Caco-2 (cell line): ENCODE measurements at regions of chr2 and their contacts with region 1.

Region 1: DNA sequence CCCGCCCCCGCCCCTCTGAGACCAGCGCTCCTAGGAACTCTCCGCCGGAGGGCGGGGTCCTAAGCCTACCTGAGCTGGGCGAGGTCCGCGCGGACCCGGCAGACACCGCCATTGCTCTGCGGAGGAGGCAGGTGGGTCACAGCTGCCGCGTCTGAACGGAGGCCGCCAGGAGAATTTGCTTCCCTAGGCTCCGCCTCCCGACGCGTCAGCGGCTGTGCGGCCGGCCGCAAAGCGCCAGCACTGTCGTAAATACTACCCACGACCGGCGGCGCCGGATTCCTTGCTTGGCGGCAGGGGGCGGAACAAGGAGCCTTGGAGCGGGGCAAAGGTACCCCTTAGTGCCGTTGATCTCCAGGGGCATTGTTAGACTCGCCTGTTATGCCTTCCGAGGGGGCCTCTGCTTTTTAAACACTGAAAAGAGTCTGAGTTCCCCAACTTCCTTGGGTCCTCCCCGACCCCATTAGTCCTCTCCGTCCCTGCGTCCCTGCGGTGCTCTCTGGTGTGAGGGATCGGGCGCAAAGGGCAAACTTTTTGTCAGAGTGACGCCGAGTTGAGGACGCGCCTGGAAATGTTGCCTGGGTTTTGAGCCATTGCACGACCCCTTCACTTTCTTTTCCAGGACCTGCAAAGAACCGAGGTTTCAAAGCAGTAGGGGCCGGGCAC is at the start of gene GGCX:
- DNase-seq: peak; percentile 96 to 97
- H3K4me3 ChIP-seq: peak within 1 kb of the TSS; percentile 65
- H3K4me3 Mint-ChIP-seq: peak within 1 kb of the TSS; percentile 96
- H3K27ac Mint-ChIP-seq: peak within 1 kb of the TSS; percentile 98
- H3K4me1 ChIP-seq: peaks cover 34% of the 10 kb centered on the region
- H3K4me1 Mint-ChIP-seq: peaks cover 26% of the 10 kb centered on the region
- H3K27me3 ChIP-seq: no peaks in the 10 kb centered on the region
- H3K27me3 Mint-ChIP-seq: no peaks in the 10 kb centered on the region
- CTCF ChIP-seq: no peak
- total RNA-seq, gene GGCX: 85.1 and 96.8 TPM in 2 replicates

Region 2: GRCh38 chr2:85475799-85476490 is 85.5 kb before region 1 on chr2:
- CTCF ChIA-PET with region 1: no interaction called
- POLR2A ChIA-PET with region 1: no interaction called
- intact Hi-C with region 1: no loop called
- DNase-seq: no peak
- H3K4me3 ChIP-seq: no peak overlapping the region
- H3K4me3 Mint-ChIP-seq: no peak overlapping the region
- H3K27ac Mint-ChIP-seq: no peak overlapping the region
- H3K4me1 ChIP-seq: peaks cover 7% of the 10 kb centered on the region; the same call in 1 of the 2 replicates
- H3K4me1 Mint-ChIP-seq: peaks cover 6% of the 10 kb centered on the region
- H3K27me3 ChIP-seq: no peaks in the 10 kb centered on the region
- H3K27me3 Mint-ChIP-seq: no peaks in the 10 kb centered on the region
- CTCF ChIP-seq: no peak

Region 3: GRCh38 chr2:85577386-85578242 is 16.2 kb after region 1 on chr2 and contains the start of gene VAMP8:
- CTCF ChIA-PET with region 1: interaction called, 6 read pairs
- POLR2A ChIA-PET with region 1: interaction called, 24 read pairs
- intact Hi-C with region 1: loop called (anchors 1 kb)
- DNase-seq: peak; percentile 87 to 89
- H3K4me3 ChIP-seq: peak within 1 kb of the TSS; percentile 67
- H3K4me3 Mint-ChIP-seq: peak within 1 kb of the TSS; percentile 90
- H3K27ac Mint-ChIP-seq: peak within 1 kb of the TSS; percentile 93
- H3K4me1 ChIP-seq: peaks cover 14% of the 10 kb centered on the region
- H3K4me1 Mint-ChIP-seq: peaks cover 17% of the 10 kb centered on the region
- H3K27me3 ChIP-seq: no peaks in the 10 kb centered on the region
- H3K27me3 Mint-ChIP-seq: no peaks in the 10 kb centered on the region
- CTCF ChIP-seq: no peak
- total RNA-seq, gene VAMP8: 82.9 and 85.5 TPM in 2 replicates

Region 4: DNA sequence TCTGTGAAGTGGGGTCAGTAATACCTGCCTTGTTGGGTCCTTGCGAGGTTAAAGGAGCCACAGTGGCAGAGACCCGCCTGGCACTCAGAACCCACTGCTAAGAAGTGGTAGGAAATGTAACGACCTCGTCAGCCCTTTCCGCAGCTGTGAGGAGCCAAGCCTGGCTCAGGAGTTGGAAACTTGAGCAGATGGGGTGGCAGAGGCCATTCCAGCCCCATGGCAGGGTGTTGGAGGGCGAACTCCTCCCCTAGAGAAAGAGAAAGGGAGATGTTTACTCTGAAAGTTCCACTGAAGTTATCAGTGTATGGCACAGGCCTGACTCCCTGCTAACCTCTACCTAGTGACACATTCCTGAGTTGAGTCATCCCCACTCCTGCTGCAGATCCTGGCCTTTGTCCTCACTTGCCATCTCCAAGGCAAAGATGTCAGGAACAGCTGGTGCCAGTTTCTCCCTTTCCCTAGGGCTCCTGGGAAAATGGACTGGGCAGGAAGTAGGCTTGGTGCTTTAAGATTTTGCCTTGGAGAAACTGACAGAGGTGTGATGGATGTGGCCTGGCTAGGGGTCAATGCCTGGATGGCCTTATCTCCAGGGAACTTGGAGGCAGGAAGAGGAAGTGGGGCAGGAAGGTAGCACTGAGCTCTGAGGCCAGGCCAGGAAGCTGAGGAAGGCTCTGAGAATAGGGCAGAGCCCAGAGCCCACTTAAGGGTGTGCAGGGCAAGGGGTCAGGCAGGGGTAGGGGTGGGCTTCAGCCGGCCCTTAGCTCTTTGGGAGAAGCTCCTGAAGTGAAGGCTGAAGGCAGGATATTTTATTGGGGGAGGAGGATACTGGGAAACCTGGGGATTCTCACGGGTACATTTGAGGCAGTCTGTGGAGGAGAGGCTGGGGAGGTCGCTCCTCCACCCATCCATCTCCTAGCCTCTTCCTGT is 23.7 kb after region 1 on chr2:
- CTCF ChIA-PET with region 1: interaction called, 4 read pairs
- POLR2A ChIA-PET with region 1: interaction called, 9 read pairs
- intact Hi-C with region 1: loop called (anchors 1 kb)
- DNase-seq: peak; percentile 79 to 90
- H3K4me3 ChIP-seq: peak overlapping the region; percentile 47
- H3K4me3 Mint-ChIP-seq: peak overlapping the region; percentile 76
- H3K27ac Mint-ChIP-seq: peak overlapping the region; percentile 83
- H3K4me1 ChIP-seq: peaks cover 27% of the 10 kb centered on the region
- H3K4me1 Mint-ChIP-seq: peaks cover 34% of the 10 kb centered on the region
- H3K27me3 ChIP-seq: no peaks in the 10 kb centered on the region
- H3K27me3 Mint-ChIP-seq: peaks cover 10% of the 10 kb centered on the region
- CTCF ChIP-seq: no peak

Region 5: DNA sequence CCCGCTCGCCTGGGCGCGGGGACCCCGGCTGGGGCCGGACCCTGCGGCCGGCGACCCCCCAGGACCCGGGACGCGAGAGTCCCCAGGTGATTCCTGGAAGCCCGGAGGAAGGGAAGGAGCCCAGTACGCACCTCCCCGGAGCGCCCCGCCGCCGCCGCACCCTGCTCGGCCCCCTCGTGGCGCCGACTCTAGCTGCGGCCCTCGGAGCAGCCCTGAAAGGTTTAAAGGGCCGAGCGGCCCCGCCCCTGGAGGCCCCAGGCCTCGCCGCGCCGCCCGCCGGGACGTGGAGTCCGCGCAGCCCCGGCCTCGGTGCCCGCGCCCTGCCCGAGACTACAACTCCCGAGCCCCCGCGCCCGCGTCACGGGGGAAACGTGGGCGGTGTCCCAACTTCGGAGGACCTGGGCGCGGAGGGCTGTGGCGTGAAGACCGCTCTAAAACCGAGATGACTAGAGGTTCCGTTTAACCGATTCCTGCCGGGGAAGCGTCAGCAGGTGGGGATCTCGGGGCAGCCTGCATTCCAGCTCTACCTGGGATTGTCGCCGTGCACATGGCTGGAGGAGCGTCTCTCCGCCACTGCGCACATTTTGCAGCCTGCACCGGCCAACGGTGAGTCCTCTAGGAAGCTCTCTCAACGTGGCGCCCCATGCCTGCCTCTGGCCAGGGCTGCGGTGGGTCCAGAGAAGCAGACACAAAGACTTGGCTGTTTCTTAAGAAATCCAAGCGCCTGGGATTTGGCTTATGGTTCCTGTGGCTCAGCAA is 41.2 kb after region 1 on chr2 and contains the start of gene TMEM150A:
- CTCF ChIA-PET with region 1: interaction called, 3 read pairs
- POLR2A ChIA-PET with region 1: no interaction called
- intact Hi-C with region 1: loop called (anchors 1 kb)
- DNase-seq: peak; percentile 92 to 96
- H3K4me3 ChIP-seq: peak within 1 kb of the TSS; percentile 83
- H3K4me3 Mint-ChIP-seq: peak within 1 kb of the TSS; percentile 87
- H3K27ac Mint-ChIP-seq: peak within 1 kb of the TSS; percentile 81
- H3K4me1 ChIP-seq: peaks cover 12% of the 10 kb centered on the region; the same call in 1 of the 2 replicates
- H3K4me1 Mint-ChIP-seq: peaks cover 13% of the 10 kb centered on the region
- H3K27me3 ChIP-seq: no peaks in the 10 kb centered on the region
- H3K27me3 Mint-ChIP-seq: no peaks in the 10 kb centered on the region
- CTCF ChIP-seq: peak; percentile 47 to 55
- total RNA-seq, gene TMEM150A: 24.0 and 25.3 TPM in 2 replicates